Transverse colon (tissue), 4 donors: ENCODE measurements at regions of chr3 and their contacts with region 1.

Region 1: DNA sequence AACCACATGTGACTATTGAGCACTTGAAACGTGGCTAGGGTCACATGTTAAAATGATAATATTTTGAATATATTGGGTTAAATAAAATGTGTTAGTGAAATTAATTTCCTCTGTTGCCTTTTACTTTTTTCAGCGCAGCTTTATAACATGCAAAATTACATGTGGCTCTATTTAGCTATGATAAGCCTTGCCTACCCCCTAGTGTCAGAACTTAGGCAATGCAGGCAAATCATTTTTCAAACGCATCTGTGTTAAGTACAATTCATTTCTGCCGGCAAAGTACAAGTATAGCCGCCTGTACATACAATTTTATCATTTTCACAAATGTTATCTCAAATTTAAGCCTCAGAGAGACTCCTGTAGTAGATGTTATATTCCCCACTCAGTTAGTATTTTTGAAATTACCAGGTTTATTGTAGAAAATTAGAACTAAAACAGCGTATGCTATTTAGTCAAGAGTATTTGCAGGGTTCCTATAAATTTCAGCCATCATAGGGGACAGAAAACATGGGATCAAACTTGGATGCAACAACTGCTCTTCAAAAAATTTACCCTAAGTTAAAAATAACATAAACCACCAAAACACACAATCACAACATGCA is 56.1 kb downstream of the TAFA4 start:
- DNase-seq: no peak
- H3K4me3 ChIP-seq: no peak overlapping the region
- H3K27ac ChIP-seq: no peak overlapping the region
- H3K4me1 ChIP-seq: no peaks in the 10 kb centered on the region
- H3K27me3 ChIP-seq: no peaks in the 10 kb centered on the region
- CTCF ChIP-seq: peak; percentile 77 to 89 (median 80)
- EP300 ChIP-seq: no peak
- POLR2A ChIP-seq: no peak

Region 2: GRCh38 chr3:66938338-66938963 is 1937.8 kb before region 1 on chr3:
- in situ Hi-C with region 1: loop called in 1 of 4 experiments (anchors 25 kb)
- intact Hi-C with region 1: no loop called
- DNase-seq: peak; percentile 19
- H3K4me3 ChIP-seq: no peak overlapping the region
- H3K27ac ChIP-seq: no peak overlapping the region
- H3K4me1 ChIP-seq: no peaks in the 10 kb centered on the region
- H3K27me3 ChIP-seq: peaks cover 4% of the 10 kb centered on the region
- CTCF ChIP-seq: peak; percentile 61 to 75 (median 66)
- EP300 ChIP-seq: no peak
- POLR2A ChIP-seq: no peak

Region 3: GRCh38 chr3:66971891-66972551 is 1904.2 kb before region 1 on chr3:
- in situ Hi-C with region 1: loop called in 3 of 4 experiments (anchors 25 kb)
- intact Hi-C with region 1: no loop called
- DNase-seq: peak; percentile 83
- H3K4me3 ChIP-seq: peak overlapping the region in 3 of 4 donors; percentile 19 to 41 (median 25)
- H3K27ac ChIP-seq: peak overlapping the region in 3 of 4 donors; percentile 30 to 51 (median 40)
- H3K4me1 ChIP-seq: peaks cover 0 to 13% (median 2%) of the 10 kb centered on the region in 4 donors
- H3K27me3 ChIP-seq: no peaks in the 10 kb centered on the region
- CTCF ChIP-seq: peak; percentile 74 to 82 (median 77)
- EP300 ChIP-seq: no peak
- POLR2A ChIP-seq: no peak

Region 4: GRCh38 chr3:66998113-66998903 is 1877.9 kb before region 1 on chr3 and contains the start of gene KBTBD8:
- in situ Hi-C with region 1: loop called in 1 of 4 experiments (anchors 25 kb)
- intact Hi-C with region 1: no loop called
- DNase-seq: peak; percentile 99
- H3K4me3 ChIP-seq: peak within 1 kb of the TSS; percentile 82 to 94 (median 90)
- H3K27ac ChIP-seq: peak within 1 kb of the TSS; percentile 82 to 90 (median 86)
- H3K4me1 ChIP-seq: peaks cover 8 to 18% (median 11%) of the 10 kb centered on the region in 4 donors
- H3K27me3 ChIP-seq: peaks cover 21% of the 10 kb centered on the region
- CTCF ChIP-seq: peak in 1 of 5 experiments; percentile 10
- EP300 ChIP-seq: no peak
- POLR2A ChIP-seq: peak; percentile 71
- total RNA-seq, gene KBTBD8: 1.5 to 3.3 TPM in 2 of 4 donors, not detected in the others

Region 5: DNA sequence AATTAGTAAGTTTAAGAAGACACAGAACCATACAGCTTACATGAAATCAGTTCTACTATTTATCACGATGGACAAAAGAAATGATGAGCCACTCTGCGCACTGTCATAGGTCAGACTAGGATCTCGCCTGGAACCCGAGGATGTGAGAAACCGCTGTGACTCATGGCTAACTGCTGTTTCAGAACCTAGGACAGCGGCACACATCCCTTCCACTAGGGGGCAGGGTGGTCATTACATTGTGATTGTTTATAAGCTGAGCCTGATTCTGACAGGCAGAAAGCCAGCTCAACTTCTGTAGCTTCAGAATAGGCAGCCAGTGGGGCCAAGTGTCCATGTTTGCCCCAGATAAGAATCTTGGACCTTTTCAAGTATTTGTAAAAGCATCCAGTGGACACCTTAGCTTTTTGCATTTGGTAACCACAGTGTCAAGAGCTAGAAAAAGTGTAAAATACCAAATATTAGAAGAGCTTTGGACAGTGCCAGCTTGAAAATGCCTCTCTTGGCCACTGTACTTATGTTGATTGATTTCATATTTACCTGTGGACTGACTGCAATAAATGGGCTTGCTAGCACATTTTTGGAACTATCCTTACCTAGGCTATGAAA is 1762.3 kb before region 1 on chr3:
- in situ Hi-C with region 1: loop called (anchors 10 to 25 kb)
- intact Hi-C with region 1: loop called (anchors 10 kb)
- DNase-seq: peak; percentile 75
- H3K4me3 ChIP-seq: no peak overlapping the region
- H3K27ac ChIP-seq: no peak overlapping the region
- H3K4me1 ChIP-seq: no peaks in the 10 kb centered on the region
- H3K27me3 ChIP-seq: no peaks in the 10 kb centered on the region
- CTCF ChIP-seq: peak; percentile 72 to 89 (median 79)
- EP300 ChIP-seq: no peak
- POLR2A ChIP-seq: no peak

Region 6: GRCh38 chr3:68855620-68856019 is 20.6 kb before region 1 on chr3:
- in situ Hi-C with region 1: no loop called
- intact Hi-C with region 1: no loop called
- DNase-seq: no peak
- H3K4me3 ChIP-seq: no peak overlapping the region
- H3K27ac ChIP-seq: no peak overlapping the region
- H3K4me1 ChIP-seq: no peaks in the 10 kb centered on the region
- H3K27me3 ChIP-seq: no peaks in the 10 kb centered on the region
- CTCF ChIP-seq: no peak
- EP300 ChIP-seq: no peak
- POLR2A ChIP-seq: no peak